ENCODE measurements at regions of chr1 and their contacts with region 1.

Region 1: GRCh38 chr1:32394141-32394889 is at the start of gene BSDC1:
- DNase-seq: peak; percentile 95 to 98
- H3K4me3 ChIP-seq: peak within 1 kb of the TSS; percentile 77
- H3K4me3 Mint-ChIP-seq: peak within 1 kb of the TSS; percentile 95
- H3K27ac Mint-ChIP-seq: peak within 1 kb of the TSS; percentile 98
- H3K4me1 ChIP-seq: no peaks in the 10 kb centered on the region
- H3K4me1 Mint-ChIP-seq: no peaks in the 10 kb centered on the region
- H3K27me3 ChIP-seq: no peaks in the 10 kb centered on the region
- H3K27me3 Mint-ChIP-seq: no peaks in the 10 kb centered on the region
- CTCF ChIP-seq: no peak
- total RNA-seq, gene BSDC1: 32.5 and 33.2 TPM in 2 replicates

Region 2: GRCh38 chr1:32013386-32014198 is 380.7 kb before region 1 on chr1 and contains the start of gene KHDRBS1:
- CTCF ChIA-PET with region 1: no interaction called
- POLR2A ChIA-PET with region 1: no interaction called
- intact Hi-C with region 1: no loop called
- DNase-seq: peak; percentile 95 to 97
- H3K4me3 ChIP-seq: peak within 1 kb of the TSS; percentile 91
- H3K4me3 Mint-ChIP-seq: peak within 1 kb of the TSS; percentile 96
- H3K27ac Mint-ChIP-seq: peak within 1 kb of the TSS; percentile 98
- H3K4me1 ChIP-seq: no peaks in the 10 kb centered on the region
- H3K4me1 Mint-ChIP-seq: peaks cover 14% of the 10 kb centered on the region
- H3K27me3 ChIP-seq: no peaks in the 10 kb centered on the region
- H3K27me3 Mint-ChIP-seq: no peaks in the 10 kb centered on the region
- CTCF ChIP-seq: no peak
- total RNA-seq, gene KHDRBS1: 131 and 137 TPM in 2 replicates

Region 3: GRCh38 chr1:32072622-32073298 is 321.6 kb before region 1 on chr1 and contains the start of gene TMEM39B:
- CTCF ChIA-PET with region 1: no interaction called
- POLR2A ChIA-PET with region 1: no interaction called
- intact Hi-C with region 1: no loop called
- DNase-seq: peak; percentile 88 to 89
- H3K4me3 ChIP-seq: peak within 1 kb of the TSS; percentile 79
- H3K4me3 Mint-ChIP-seq: peak within 1 kb of the TSS; percentile 88
- H3K27ac Mint-ChIP-seq: peak within 1 kb of the TSS; percentile 76
- H3K4me1 ChIP-seq: no peaks in the 10 kb centered on the region
- H3K4me1 Mint-ChIP-seq: peaks cover 16% of the 10 kb centered on the region
- H3K27me3 ChIP-seq: no peaks in the 10 kb centered on the region
- H3K27me3 Mint-ChIP-seq: no peaks in the 10 kb centered on the region
- CTCF ChIP-seq: peak in 1 of 2 experiments; percentile 13
- total RNA-seq, gene TMEM39B: 9.8 and 12.1 TPM in 2 replicates

Region 4: DNA sequence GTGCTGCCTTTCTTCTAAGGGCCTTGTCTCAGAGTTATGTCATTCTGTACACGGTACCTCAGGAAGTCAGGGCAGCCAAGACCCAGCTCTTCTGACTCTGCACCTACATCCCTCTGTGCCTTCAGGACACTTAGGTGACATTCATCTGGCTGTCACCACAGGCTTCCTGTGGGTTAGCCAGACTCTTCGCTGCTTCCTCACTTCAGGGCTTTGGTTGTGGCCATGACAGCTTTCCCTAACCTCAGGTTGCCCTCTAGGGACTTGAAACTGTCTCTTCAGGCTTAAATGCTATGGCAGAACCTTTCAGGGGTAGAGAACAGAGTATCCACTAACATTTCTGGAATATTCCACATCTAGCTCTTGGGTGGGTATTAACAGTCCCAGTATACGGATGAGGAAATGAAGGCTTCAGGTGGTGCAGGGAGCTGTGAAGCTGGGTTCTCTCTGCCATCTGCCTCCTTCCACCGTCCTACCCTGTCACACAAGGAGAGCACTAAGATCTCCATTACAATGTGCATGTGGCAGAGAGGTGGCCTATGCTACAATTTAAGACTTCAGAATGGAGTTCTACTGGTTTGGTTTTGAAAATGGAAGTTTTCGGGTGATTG is 22.1 kb before region 1 on chr1:
- CTCF ChIA-PET with region 1: no interaction called
- POLR2A ChIA-PET with region 1: no interaction called
- intact Hi-C with region 1: no loop called
- DNase-seq: no peak
- H3K4me3 ChIP-seq: no peak overlapping the region
- H3K4me3 Mint-ChIP-seq: no peak overlapping the region
- H3K27ac Mint-ChIP-seq: no peak overlapping the region
- H3K4me1 ChIP-seq: no peaks in the 10 kb centered on the region
- H3K4me1 Mint-ChIP-seq: no peaks in the 10 kb centered on the region
- H3K27me3 ChIP-seq: no peaks in the 10 kb centered on the region
- H3K27me3 Mint-ChIP-seq: no peaks in the 10 kb centered on the region
- CTCF ChIP-seq: no peak

Region 5: DNA sequence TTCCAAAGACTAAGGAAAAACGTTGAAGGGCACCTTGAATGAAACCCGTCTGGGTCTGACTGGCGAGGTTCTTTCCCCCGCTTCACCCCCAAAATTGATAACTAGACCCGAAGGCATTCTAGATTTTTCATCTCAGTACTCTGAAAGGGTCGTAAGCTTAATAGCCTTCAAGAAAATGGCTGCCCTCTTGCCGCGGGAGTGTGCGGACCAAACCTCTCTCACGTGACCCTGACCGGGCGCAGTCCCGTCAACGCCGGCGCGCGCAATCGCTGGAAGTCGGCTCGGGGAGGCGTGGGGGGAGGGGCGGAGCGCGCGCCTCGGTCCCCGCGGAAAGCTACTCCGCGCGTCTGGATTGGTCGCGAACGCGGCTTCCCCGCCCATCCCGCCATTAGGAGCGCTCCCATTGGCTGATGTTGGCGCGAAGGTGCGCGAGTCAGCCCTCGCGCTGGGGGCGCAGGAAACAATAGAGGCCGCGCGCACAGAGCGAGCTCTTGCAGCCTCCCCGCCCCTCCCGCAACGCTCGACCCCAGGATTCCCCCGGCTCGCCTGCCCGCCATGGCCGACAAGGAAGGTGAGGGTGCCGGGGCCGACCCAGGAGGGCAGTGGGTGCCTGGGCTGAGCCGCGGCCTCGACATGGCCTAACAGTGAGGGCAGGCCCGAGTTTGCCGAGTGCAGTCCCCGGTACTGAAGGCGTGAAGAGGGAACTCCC is 256.6 kb after region 1 on chr1 and contains the start of gene RBBP4:
- CTCF ChIA-PET with region 1: interaction called, 3 read pairs
- POLR2A ChIA-PET with region 1: interaction called, 10 read pairs
- intact Hi-C with region 1: no loop called
- DNase-seq: peak; percentile 94 to 97
- H3K4me3 ChIP-seq: peak within 1 kb of the TSS; percentile 80
- H3K4me3 Mint-ChIP-seq: peak within 1 kb of the TSS; percentile 83
- H3K27ac Mint-ChIP-seq: peak within 1 kb of the TSS; percentile 92
- H3K4me1 ChIP-seq: 0 out of 2 replicates have a peak, but pooled peaks cover 7% of the 10 kb centered on the region
- H3K4me1 Mint-ChIP-seq: no peaks in the 10 kb centered on the region
- H3K27me3 ChIP-seq: no peaks in the 10 kb centered on the region
- H3K27me3 Mint-ChIP-seq: no peaks in the 10 kb centered on the region
- CTCF ChIP-seq: no peak
- total RNA-seq, gene RBBP4: 175 and 179 TPM in 2 replicates

Measured in Caco-2 (cell line).